ENCODE measurements at regions of chr20 and their contacts with region 1.

Region 1: DNA sequence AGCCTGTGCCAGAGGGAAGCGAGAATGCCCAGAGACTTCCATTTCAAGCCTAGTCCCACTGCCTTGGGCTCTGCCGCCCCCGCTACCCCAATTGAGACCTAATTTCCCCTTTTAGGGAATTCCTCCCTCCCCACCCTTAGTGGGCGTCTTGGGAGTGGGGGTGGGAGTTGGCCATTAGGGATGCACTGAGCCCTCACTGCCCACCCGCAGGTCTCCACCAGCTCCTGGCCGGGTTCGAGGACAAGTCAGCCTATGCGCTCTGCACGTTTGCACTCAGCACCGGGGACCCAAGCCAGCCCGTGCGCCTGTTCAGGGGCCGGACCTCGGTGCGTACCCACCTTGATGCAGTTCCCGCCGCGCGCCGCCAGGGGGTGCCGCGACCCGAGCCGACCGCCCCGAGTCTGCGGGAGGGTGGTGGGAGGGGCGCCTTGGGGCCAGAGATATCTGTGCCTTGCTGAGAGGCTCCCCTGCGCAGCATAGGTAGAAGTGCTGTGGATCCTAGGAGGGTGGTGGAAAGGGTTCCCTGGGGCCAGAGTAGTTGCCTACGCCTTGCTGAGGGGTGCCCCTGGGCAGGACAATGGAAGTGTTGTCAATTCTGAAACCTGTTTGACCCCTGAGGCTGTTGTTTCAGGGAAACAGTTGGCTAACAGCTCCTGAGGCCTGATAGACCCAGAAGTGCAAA is 9.2 kb downstream of the ITPA start:
- DNase-seq: peak; percentile 48 to 72
- ATAC-seq: peak; percentile 53 to 82 (median 72)
- H3K4me3 ChIP-seq: peak overlapping the region in 1 of 10 donors; percentile 15
- H3K27ac ChIP-seq: no peak overlapping the region
- H3K4me1 ChIP-seq: peaks cover 0 to 20% (median 7%) of the 10 kb centered on the region in 9 donors
- H3K27me3 ChIP-seq: no peaks in the 10 kb centered on the region
- CTCF ChIP-seq: peak; percentile 73 to 96 (median 94)

Region 2: DNA sequence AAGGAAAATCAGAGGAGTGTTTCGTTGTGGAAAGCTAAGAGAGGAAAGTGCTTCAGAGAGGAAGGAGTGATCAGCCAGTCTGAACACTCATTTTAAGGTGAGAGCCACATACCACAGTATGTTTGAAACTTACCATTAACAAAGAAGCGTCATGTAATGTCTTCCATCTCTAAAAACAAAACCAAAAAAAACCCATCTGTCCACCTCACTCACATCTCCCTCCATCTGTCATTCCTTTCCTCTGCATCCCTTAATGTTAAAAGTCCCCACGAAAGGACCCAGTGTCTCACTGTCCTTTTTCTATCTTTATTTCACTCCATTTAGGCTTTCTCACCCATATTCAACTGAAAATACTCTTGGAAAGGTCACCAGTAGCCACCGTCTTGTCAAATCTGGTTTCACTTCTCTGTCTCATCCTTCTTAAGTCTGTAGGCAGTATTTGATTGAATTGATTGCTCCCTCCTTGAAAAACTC is 234.4 kb before region 1 on chr20:
- intact Hi-C with region 1: no loop called
- DNase-seq: no peak
- ATAC-seq: no peak
- H3K4me3 ChIP-seq: no peak overlapping the region
- H3K27ac ChIP-seq: no peak overlapping the region
- H3K4me1 ChIP-seq: peaks cover 0 to 57% (median 9%) of the 10 kb centered on the region in 9 donors
- H3K27me3 ChIP-seq: no peaks in the 10 kb centered on the region
- CTCF ChIP-seq: no peak

Region 3: DNA sequence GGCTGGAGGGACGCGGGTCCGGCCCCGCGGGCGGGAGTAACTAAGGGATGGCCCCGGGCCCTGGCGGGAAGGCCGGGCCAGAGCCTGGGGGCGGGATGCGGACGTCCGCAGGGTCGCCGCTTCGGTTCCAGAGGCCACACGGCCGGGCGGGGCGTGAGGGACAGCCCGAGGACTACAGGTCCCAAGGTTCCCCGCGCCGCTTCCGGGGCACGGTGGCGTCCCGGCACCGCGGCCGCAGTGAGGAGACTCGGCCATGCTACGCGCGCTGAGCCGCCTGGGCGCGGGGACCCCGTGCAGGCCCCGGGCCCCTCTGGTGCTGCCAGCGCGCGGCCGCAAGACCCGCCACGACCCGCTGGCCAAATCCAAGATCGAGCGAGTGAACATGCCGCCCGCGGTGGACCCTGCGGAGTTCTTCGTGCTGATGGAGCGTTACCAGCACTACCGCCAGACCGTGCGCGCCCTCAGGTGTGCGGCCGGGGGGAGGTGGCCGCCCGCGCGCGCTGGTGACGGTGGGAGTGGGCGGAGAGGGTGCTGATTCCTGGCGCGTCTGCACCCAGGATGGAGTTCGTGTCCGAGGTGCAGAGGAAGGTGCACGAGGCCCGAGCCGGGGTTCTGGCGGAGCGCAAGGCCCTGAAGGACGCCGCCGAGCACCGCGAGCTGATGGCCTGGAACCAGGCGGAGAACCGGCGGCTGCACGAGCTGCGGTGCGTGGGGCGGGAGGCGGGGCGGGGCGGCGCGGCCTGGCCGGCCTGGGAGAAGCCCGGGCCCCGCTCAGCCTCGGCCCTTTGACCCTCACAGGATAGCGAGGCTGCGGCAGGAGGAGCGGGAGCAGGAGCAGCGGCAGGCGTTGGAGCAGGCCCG is 172.4 kb before region 1 on chr20 and contains the start of gene MRPS26:
- intact Hi-C with region 1: no loop called
- DNase-seq: peak; percentile 91 to 93
- ATAC-seq: peak; percentile 92 to 95 (median 94)
- H3K4me3 ChIP-seq: peak within 1 kb of the TSS; percentile 68 to 99 (median 94)
- H3K27ac ChIP-seq: peak within 1 kb of the TSS; percentile 85 to 95 (median 90)
- H3K4me1 ChIP-seq: peaks cover 13 to 42% (median 31%) of the 10 kb centered on the region in 9 donors
- H3K27me3 ChIP-seq: no peaks in the 10 kb centered on the region
- CTCF ChIP-seq: no peak
- total RNA-seq, gene MRPS26: 39.1 to 60.8 (median 51.5) TPM

Region 4: GRCh38 chr20:3276680-3277015 is 58.2 kb after region 1 on chr20:
- intact Hi-C with region 1: loop called in 2 of 10 experiments (anchors 5 to 10 kb)
- DNase-seq: no peak
- ATAC-seq: peak in 4 of 8 donors; percentile 24 to 52 (median 40)
- H3K4me3 ChIP-seq: no peak overlapping the region
- H3K27ac ChIP-seq: no peak overlapping the region
- H3K4me1 ChIP-seq: peaks cover 0 to 20% (median 4%) of the 10 kb centered on the region in 9 donors
- H3K27me3 ChIP-seq: no peaks in the 10 kb centered on the region
- CTCF ChIP-seq: peak in 6 of 9 donors; percentile 16 to 42 (median 30)

Region 5: GRCh38 chr20:3282271-3283221 is 64.1 kb after region 1 on chr20:
- intact Hi-C with region 1: loop called in 2 of 10 experiments (anchors 5 to 10 kb)
- DNase-seq: no peak
- ATAC-seq: no peak
- H3K4me3 ChIP-seq: no peak overlapping the region
- H3K27ac ChIP-seq: no peak overlapping the region
- H3K4me1 ChIP-seq: no peaks in the 10 kb centered on the region
- H3K27me3 ChIP-seq: no peaks in the 10 kb centered on the region
- CTCF ChIP-seq: no peak

Region 6: GRCh38 chr20:3312940-3313682 is 94.7 kb after region 1 on chr20:
- intact Hi-C with region 1: loop called in 7 of 10 experiments (anchors 1 to 10 kb)
- DNase-seq: no peak
- ATAC-seq: peak in 7 of 8 donors; percentile 32 to 75 (median 56)
- H3K4me3 ChIP-seq: no peak overlapping the region
- H3K27ac ChIP-seq: peak overlapping the region in 9 of 10 donors; percentile 3 to 78 (median 64)
- H3K4me1 ChIP-seq: peaks cover 5 to 56% (median 40%) of the 10 kb centered on the region in 9 donors
- H3K27me3 ChIP-seq: no peaks in the 10 kb centered on the region
- CTCF ChIP-seq: no peak